ENCODE measurements at regions of chr3 and their contacts with region 1.

Region 1: GRCh38 chr3:48400824-48401433 is 28.9 kb downstream of the FBXW12 start:
- DNase-seq: peak; percentile 67 to 77 (median 72)
- H3K4me3 ChIP-seq: no peak overlapping the region
- H3K4me3 Mint-ChIP-seq: no peak overlapping the region
- H3K27ac ChIP-seq: no peak overlapping the region
- H3K27ac Mint-ChIP-seq: peak overlapping the region in 2 of 7 donors; percentile 3 to 8
- H3K4me1 ChIP-seq: no peaks in the 10 kb centered on the region
- H3K4me1 Mint-ChIP-seq: peaks cover 0 to 2% (median 0%) of the 10 kb centered on the region in 4 donors
- H3K27me3 ChIP-seq: no peaks in the 10 kb centered on the region
- H3K27me3 Mint-ChIP-seq: peaks cover under 1 to 2% of the 10 kb centered on the region in 2 donors

Region 2: GRCh38 chr3:48273594-48274211 is 127.2 kb before region 1 on chr3:
- CTCF ChIA-PET with region 1: interaction called, 15 read pairs
- POLR2A ChIA-PET with region 1: no interaction called
- intact Hi-C with region 1: loop called (anchors 1 kb)
- DNase-seq: peak; percentile 51 to 66 (median 60)
- H3K4me3 ChIP-seq: no peak overlapping the region
- H3K4me3 Mint-ChIP-seq: no peak overlapping the region
- H3K27ac ChIP-seq: no peak overlapping the region
- H3K27ac Mint-ChIP-seq: peak overlapping the region in 2 of 7 donors; percentile 12 to 74
- H3K4me1 ChIP-seq: peaks cover 15% of the 10 kb centered on the region
- H3K4me1 Mint-ChIP-seq: peaks cover 14 to 27% (median 21%) of the 10 kb centered on the region in 4 donors
- H3K27me3 ChIP-seq: no peaks in the 10 kb centered on the region
- H3K27me3 Mint-ChIP-seq: no peaks in the 10 kb centered on the region

Region 3: DNA sequence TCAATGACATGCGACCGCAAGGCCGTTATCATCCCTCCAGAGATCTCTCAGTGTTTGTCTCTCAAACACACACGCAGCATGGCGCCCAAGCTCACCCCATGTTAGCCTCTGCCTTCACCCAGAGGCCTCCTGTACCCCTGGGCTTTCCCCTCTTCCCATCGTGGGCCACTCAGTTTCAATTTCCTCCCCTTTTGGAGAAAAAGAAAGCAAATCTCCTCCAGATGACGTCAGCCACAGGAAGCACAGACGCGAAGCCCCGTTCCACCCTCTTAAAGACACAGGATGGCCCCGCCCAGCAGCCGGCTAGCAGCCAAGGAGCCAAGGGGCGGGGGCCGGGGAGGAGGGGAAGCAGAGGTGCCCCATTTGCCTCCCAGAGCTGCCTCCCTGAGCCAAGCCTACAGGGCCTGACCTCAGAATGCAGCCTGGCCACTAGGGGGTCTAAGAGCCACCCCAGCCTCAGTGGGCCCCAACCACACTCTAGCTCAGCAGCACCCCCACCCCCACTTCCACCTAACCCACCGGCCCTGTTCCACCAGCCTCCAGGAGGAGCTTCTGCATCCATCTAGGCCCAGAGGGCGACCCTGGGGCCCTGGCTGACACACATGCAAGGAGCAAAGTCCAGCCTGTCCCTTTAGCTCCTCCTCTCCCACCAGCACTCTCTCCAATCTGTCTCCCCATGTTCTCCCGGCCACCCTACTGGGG is 72.1 kb after region 1 on chr3:
- CTCF ChIA-PET with region 1: interaction called, 14 read pairs
- POLR2A ChIA-PET with region 1: no interaction called
- intact Hi-C with region 1: no loop called
- DNase-seq: peak; percentile 93 to 98 (median 96)
- H3K4me3 ChIP-seq: peak overlapping the region; percentile 93 to 95
- H3K4me3 Mint-ChIP-seq: peak overlapping the region; percentile 84 to 99 (median 95)
- H3K27ac ChIP-seq: peak overlapping the region; percentile 97
- H3K27ac Mint-ChIP-seq: peak overlapping the region; percentile 92 to 100 (median 99)
- H3K4me1 ChIP-seq: peaks cover 86% of the 10 kb centered on the region
- H3K4me1 Mint-ChIP-seq: peaks cover 34 to 75% (median 54%) of the 10 kb centered on the region in 4 donors
- H3K27me3 ChIP-seq: no peaks in the 10 kb centered on the region
- H3K27me3 Mint-ChIP-seq: no peaks in the 10 kb centered on the region

Region 4: GRCh38 chr3:48514436-48515227 is 113.7 kb after region 1 on chr3:
- CTCF ChIA-PET with region 1: interaction called, 155 read pairs
- POLR2A ChIA-PET with region 1: no interaction called
- intact Hi-C with region 1: no loop called
- DNase-seq: peak; percentile 56 to 65 (median 62)
- H3K4me3 ChIP-seq: no peak overlapping the region
- H3K4me3 Mint-ChIP-seq: peak overlapping the region; percentile 52 to 81 (median 72)
- H3K27ac ChIP-seq: peak overlapping the region; percentile 31
- H3K27ac Mint-ChIP-seq: peak overlapping the region in 6 of 7 donors; percentile 43 to 86 (median 67)
- H3K4me1 ChIP-seq: peaks cover 75% of the 10 kb centered on the region
- H3K4me1 Mint-ChIP-seq: peaks cover 49 to 82% (median 68%) of the 10 kb centered on the region in 4 donors
- H3K27me3 ChIP-seq: no peaks in the 10 kb centered on the region
- H3K27me3 Mint-ChIP-seq: no peaks in the 10 kb centered on the region

Region 5: DNA sequence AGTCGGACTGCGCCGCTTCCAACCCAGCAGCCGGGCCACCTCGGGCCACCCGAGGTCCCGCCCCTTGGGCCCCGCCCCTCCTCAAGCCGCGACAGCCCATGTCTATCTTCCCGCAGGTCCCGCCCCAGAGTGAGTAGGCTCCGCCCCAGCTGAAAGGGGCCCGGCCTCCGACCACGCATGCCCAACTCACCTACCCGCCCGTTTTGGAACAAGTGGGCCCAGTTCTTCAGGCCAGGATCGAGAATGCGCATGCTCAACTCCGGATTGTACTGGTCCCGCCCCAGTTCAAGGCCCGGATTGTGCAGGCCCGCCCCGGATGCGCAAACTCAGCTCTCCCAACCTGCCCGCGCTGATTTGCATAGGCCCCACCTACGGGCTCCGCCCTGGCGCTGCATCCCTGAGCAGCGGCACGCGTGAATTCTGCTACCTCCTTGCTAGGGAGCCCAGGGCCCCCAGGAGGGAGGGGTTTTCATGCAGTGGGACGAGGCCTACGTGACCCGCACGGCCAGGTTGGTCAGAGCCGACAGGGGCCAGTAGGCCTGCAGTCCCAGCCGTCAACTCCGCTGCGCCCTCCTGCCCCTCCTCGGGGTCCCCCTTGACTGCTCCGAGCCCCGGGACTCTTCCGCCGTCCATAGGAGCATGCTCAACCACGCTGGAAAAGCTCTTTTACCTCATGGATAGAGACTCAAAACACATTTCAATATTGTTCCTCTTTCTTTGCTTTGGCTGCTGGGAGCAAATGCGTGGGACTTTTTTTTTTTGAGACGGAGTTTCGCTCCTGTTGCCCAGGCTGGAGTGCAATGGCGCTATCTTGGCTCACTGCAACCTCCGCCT is 156.1 kb after region 1 on chr3 and contains the start of gene PFKFB4:
- CTCF ChIA-PET with region 1: interaction called, 330 read pairs
- POLR2A ChIA-PET with region 1: interaction called, 12 read pairs
- intact Hi-C with region 1: loop called (anchors 1 kb)
- DNase-seq: peak; percentile 99 to 100 (median 100)
- H3K4me3 ChIP-seq: peak within 1 kb of the TSS; percentile 69 to 82
- H3K4me3 Mint-ChIP-seq: peak within 1 kb of the TSS; percentile 77 to 96 (median 87)
- H3K27ac ChIP-seq: peak within 1 kb of the TSS; percentile 39
- H3K27ac Mint-ChIP-seq: peak within 1 kb of the TSS; percentile 66 to 89 (median 78)
- H3K4me1 ChIP-seq: peaks cover 23% of the 10 kb centered on the region
- H3K4me1 Mint-ChIP-seq: peaks cover 5 to 22% (median 17%) of the 10 kb centered on the region in 4 donors
- H3K27me3 ChIP-seq: no peaks in the 10 kb centered on the region
- H3K27me3 Mint-ChIP-seq: no peaks in the 10 kb centered on the region
- total RNA-seq, gene PFKFB4: 2.6 to 2.7 TPM

Region 6: DNA sequence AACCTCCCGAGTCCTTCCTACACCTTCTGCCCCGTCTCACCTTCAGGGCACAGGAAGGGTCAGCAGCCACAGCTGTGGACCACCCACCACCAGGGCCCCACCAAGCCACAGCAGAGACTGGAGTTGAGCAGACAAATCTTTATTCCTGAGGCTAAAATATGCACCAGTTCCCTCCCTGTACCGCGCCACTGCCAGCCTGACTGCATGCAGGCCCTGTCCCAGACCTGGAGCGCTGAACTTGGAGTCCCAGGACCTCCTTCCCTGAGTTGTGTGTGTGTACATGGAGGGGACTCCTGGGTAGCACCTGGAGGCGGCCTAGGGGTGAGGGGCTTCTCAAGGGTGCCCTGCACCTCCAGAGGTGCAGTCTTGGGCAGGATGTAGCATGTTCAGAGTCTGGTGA is 224.7 kb after region 1 on chr3:
- CTCF ChIA-PET with region 1: no interaction called
- POLR2A ChIA-PET with region 1: no interaction called
- intact Hi-C with region 1: no loop called
- DNase-seq: no peak
- H3K4me3 ChIP-seq: no peak overlapping the region
- H3K4me3 Mint-ChIP-seq: no peak overlapping the region
- H3K27ac ChIP-seq: no peak overlapping the region
- H3K27ac Mint-ChIP-seq: no peak overlapping the region
- H3K4me1 ChIP-seq: peaks cover 5% of the 10 kb centered on the region
- H3K4me1 Mint-ChIP-seq: peaks cover 5 to 16% (median 8%) of the 10 kb centered on the region in 4 donors
- H3K27me3 ChIP-seq: no peaks in the 10 kb centered on the region
- H3K27me3 Mint-ChIP-seq: no peaks in the 10 kb centered on the region

Region 7: DNA sequence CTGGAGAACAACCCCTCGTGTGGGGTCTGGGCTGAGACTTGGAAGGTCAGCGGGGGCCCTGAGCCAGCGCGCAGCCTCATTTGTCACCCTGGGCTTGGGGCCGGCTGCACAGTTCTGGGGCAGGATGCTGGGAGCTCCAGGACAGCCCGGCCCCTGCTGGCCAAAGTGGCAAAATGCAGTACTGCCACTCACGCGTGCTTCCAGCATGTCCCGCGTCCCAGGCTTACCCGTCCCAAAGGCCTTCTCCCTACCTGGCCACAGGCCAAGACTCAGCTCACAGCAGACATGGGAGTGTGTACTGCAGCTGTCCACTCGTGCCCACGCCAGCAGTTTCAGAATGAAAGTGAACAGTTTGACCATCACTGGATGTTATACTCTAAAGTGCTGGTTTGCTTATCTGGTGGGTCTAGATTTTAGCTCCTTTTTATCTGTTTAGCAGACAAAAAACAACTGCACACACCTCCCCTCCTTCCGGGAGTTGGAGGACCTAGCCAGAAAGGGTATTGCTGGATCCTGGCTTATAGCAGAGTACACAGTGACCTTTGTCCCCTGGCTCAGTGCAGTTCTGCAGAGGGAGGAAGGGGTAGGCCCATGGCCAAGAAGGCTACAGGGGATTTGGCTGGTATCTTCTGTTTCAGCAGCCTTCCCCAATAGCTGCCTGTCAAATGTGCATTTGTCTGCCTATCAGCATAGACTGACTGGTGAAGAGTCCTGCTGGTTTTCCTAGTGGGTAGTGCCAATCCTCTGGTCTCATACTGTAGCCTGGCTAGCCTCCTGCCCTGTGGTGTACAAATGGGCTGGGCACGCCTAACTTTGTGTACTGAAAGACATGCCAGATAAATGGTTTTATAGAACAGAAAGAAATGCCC is 339.3 kb after region 1 on chr3:
- CTCF ChIA-PET with region 1: interaction called, 4 read pairs
- POLR2A ChIA-PET with region 1: no interaction called
- intact Hi-C with region 1: loop called (anchors 2 kb)
- DNase-seq: peak; percentile 25 to 43 (median 37)
- H3K4me3 ChIP-seq: no peak overlapping the region
- H3K4me3 Mint-ChIP-seq: no peak overlapping the region
- H3K27ac ChIP-seq: no peak overlapping the region
- H3K27ac Mint-ChIP-seq: peak overlapping the region in 1 of 7 donors; percentile 23
- H3K4me1 ChIP-seq: no peaks in the 10 kb centered on the region
- H3K4me1 Mint-ChIP-seq: peaks cover 0 to 10% (median 2%) of the 10 kb centered on the region in 4 donors
- H3K27me3 ChIP-seq: no peaks in the 10 kb centered on the region
- H3K27me3 Mint-ChIP-seq: no peaks in the 10 kb centered on the region

Measured in CD4-positive, alpha-beta memory T cell (primary cell).